GM12878 (cell line): ENCODE measurements at regions of chr4 and their contacts with region 1.

Region 1: DNA sequence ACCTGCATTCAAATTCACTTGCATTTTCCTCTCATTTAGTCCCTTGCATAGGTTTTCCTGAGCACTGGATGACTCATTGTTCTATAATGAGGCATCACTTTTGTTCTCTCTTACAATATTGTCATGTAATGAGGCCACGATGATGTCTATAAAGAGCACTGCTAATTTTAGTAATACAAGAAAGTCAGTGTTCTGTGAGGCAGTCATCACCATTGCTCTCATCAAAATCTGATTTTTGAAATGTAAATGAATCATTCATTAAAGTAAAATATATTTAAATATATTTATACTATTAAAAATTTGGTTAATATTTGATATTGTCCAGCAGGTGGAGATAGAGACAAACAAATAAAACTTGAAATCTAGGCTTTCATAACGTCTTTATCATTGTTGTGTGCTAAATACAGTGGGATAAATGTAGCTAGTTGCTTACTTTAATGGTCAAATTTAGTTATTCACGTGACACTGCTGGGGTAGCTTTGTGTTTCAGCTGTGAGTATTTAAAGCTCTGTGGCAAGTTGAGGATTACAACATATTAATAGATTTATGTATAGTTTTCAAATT is 15.4 kb downstream of the HMGB2 start:
- DNase-seq: no peak
- ATAC-seq: peak; percentile 51; the same call in 2 of the 3 replicates
- H3K4me3 ChIP-seq: no peak overlapping the region
- H3K27ac ChIP-seq: no peak overlapping the region
- H3K4me1 ChIP-seq: no peaks in the 10 kb centered on the region; the same call in 1 of the 2 replicates
- H3K27me3 ChIP-seq: no peaks in the 10 kb centered on the region
- CTCF ChIP-seq: peak in 1 of 3 experiments; percentile 14; a peak in 3 of 6 replicates
- EP300 ChIP-seq: no peak
- POLR2A ChIP-seq: no peak
- RAD21 ChIP-seq: peak; percentile 45

Region 2: GRCh38 chr4:173025131-173025530 is 293.6 kb before region 1 on chr4:
- CTCF ChIA-PET with region 1: interaction called, 10 read pairs
- POLR2A ChIA-PET with region 1: no interaction called
- RAD21 ChIA-PET with region 1: no interaction called
- SMC1A ChIA-PET with region 1: interaction called, 3 read pairs
- in situ Hi-C with region 1: no loop called
- intact Hi-C with region 1: no loop called
- DNase-seq: peak; percentile 16
- ATAC-seq: peak; percentile 95
- H3K4me3 ChIP-seq: no peak overlapping the region
- H3K27ac ChIP-seq: no peak overlapping the region
- H3K4me1 ChIP-seq: no peaks in the 10 kb centered on the region
- H3K27me3 ChIP-seq: no peaks in the 10 kb centered on the region; a peak in 1 of 4 replicates
- CTCF ChIP-seq: peak; percentile 54 to 63 (median 58); a peak in 5 of 6 replicates
- EP300 ChIP-seq: no peak
- POLR2A ChIP-seq: no peak
- RAD21 ChIP-seq: peak; percentile 91

Region 3: DNA sequence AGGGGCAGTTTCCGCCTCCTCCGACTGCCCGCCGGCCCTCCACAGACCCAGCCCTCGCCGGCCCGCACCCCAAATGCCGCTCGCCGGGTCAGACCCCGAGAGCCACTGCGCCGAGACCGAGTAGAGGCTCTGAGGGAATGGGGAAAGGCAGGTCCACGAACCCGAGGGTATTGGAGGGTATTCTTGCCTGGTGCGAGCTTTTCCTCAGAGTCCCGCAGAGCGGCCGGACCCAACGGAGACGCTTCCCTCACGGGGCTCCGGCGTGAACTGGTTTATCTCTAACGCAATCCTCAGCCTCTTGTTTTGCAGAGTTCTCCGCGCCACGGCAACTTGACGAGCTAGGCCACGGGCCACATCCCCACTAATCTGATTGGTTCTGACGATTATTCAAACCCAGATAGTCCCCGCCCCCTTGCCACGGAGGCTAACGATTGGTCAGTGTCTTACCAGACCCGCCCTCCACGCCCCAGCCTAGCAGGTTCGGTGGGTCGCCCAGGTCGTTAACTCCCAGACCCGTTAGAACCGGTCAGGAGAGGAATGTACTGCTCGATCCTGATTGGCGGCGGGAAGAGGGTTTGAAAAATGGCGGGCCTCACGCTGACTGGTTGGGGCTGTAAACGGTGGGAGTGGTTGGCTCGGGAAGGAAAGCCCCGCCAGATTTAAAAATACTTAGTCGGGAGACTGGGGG is 15.5 kb after region 1 on chr4 and contains the start of gene HMGB2:
- CTCF ChIA-PET with region 1: interaction called, 24 read pairs
- POLR2A ChIA-PET with region 1: interaction called, 9 read pairs
- RAD21 ChIA-PET with region 1: interaction called, 11 read pairs
- SMC1A ChIA-PET with region 1: interaction called, 28 read pairs
- in situ Hi-C with region 1: no loop called
- intact Hi-C with region 1: no loop called
- DNase-seq: peak; percentile 99
- ATAC-seq: peak; percentile 92
- H3K4me3 ChIP-seq: peak within 1 kb of the TSS; percentile 94
- H3K27ac ChIP-seq: peak within 1 kb of the TSS; percentile 100
- H3K4me1 ChIP-seq: peaks cover 6% of the 10 kb centered on the region
- H3K27me3 ChIP-seq: no peaks in the 10 kb centered on the region
- CTCF ChIP-seq: no peak
- EP300 ChIP-seq: no peak; a peak in 1 of 4 replicates
- POLR2A ChIP-seq: peak; percentile 98
- RAD21 ChIP-seq: no peak
- polyA plus RNA-seq, gene HMGB2: 858 to 954 TPM

Region 4: GRCh38 chr4:173360587-173361221 is 42.0 kb after region 1 on chr4:
- CTCF ChIA-PET with region 1: interaction called, 6 read pairs
- POLR2A ChIA-PET with region 1: no interaction called
- RAD21 ChIA-PET with region 1: interaction called, 6 read pairs
- SMC1A ChIA-PET with region 1: interaction called, 5 read pairs
- in situ Hi-C with region 1: no loop called
- intact Hi-C with region 1: loop called (anchors 2 kb)
- DNase-seq: no peak
- ATAC-seq: peak; percentile 63
- H3K4me3 ChIP-seq: no peak overlapping the region
- H3K27ac ChIP-seq: no peak overlapping the region
- H3K4me1 ChIP-seq: no peaks in the 10 kb centered on the region
- H3K27me3 ChIP-seq: no peaks in the 10 kb centered on the region
- CTCF ChIP-seq: peak in 2 of 3 experiments; percentile 15 to 24; a peak in 1 of 6 replicates
- EP300 ChIP-seq: no peak
- POLR2A ChIP-seq: no peak
- RAD21 ChIP-seq: 0 out of 2 replicates have a peak, but pooled peaks have one; percentile 8

Region 5: GRCh38 chr4:173370477-173371291 is 52.0 kb after region 1 on chr4 and contains the start of gene SAP30:
- CTCF ChIA-PET with region 1: interaction called, 19 read pairs
- POLR2A ChIA-PET with region 1: interaction called, 9 read pairs
- RAD21 ChIA-PET with region 1: interaction called, 8 read pairs
- SMC1A ChIA-PET with region 1: interaction called, 9 read pairs
- in situ Hi-C with region 1: no loop called
- intact Hi-C with region 1: no loop called
- DNase-seq: peak; percentile 89
- ATAC-seq: peak; percentile 86
- H3K4me3 ChIP-seq: peak within 1 kb of the TSS; percentile 99
- H3K27ac ChIP-seq: peak within 1 kb of the TSS; percentile 84
- H3K4me1 ChIP-seq: peaks cover 8% of the 10 kb centered on the region
- H3K27me3 ChIP-seq: no peaks in the 10 kb centered on the region
- CTCF ChIP-seq: no peak
- EP300 ChIP-seq: no peak
- POLR2A ChIP-seq: peak; percentile 97
- RAD21 ChIP-seq: no peak
- polyA plus RNA-seq, gene SAP30: 5.4 to 24.0 TPM

Region 6: GRCh38 chr4:173380987-173381386 is 62.3 kb after region 1 on chr4:
- CTCF ChIA-PET with region 1: interaction called, 7 read pairs
- POLR2A ChIA-PET with region 1: no interaction called
- RAD21 ChIA-PET with region 1: interaction called, 4 read pairs
- SMC1A ChIA-PET with region 1: interaction called, 10 read pairs
- in situ Hi-C with region 1: no loop called
- intact Hi-C with region 1: no loop called
- DNase-seq: no peak
- ATAC-seq: peak; percentile 57
- H3K4me3 ChIP-seq: no peak overlapping the region
- H3K27ac ChIP-seq: no peak overlapping the region
- H3K4me1 ChIP-seq: no peaks in the 10 kb centered on the region
- H3K27me3 ChIP-seq: no peaks in the 10 kb centered on the region
- CTCF ChIP-seq: no peak
- EP300 ChIP-seq: no peak
- POLR2A ChIP-seq: no peak
- RAD21 ChIP-seq: no peak

Region 7: DNA sequence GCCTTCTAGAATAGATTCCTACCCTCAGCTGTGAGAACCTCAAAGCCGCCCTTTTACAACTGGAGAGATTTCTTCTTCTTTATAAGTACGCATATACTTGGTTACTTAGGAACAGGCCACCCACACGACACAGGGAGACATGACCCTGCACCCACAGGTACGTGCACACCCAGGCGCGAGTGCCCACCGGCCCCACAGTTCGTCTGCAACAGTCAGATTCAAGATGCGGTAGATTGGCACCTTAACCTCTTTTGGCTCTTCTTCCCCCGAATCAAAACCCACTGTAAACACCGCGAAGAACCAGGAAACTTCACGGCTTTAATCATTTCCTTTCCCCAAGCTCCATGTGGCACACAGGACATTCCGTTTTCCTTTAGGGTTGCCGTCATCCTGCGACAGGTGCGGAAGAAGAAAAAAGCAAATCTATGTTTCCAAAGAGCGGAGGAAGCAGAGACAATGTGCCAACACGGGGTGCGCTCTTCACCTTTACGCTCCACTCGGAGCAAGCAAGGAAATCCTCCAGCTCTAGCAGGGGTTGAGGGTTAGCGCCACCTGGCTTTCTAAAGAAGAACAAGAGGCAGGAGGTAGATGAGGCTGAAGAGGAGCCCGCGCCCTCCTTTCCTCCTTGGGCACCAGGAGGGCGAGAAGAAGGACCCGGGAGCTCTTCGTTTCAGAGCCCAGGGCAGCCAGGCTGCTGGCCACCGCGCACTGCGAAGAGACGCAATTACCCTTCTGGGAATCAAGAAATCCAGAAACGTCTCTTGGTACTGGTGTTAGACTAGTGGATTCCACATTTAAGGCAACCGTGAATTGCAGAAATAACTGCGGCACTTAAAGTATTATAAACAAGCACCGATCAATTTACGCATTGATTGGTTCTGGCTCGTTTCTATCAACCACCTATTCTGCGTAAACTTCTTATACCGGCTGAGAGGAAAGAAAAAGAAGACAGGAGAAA is 175.6 kb after region 1 on chr4:
- CTCF ChIA-PET with region 1: interaction called, 6 read pairs
- POLR2A ChIA-PET with region 1: no interaction called
- RAD21 ChIA-PET with region 1: interaction called, 8 read pairs
- SMC1A ChIA-PET with region 1: no interaction called
- in situ Hi-C with region 1: no loop called
- intact Hi-C with region 1: loop called (anchors 5 kb)
- DNase-seq: peak; percentile 27
- ATAC-seq: peak; percentile 99
- H3K4me3 ChIP-seq: peak overlapping the region; percentile 70; the same call in 1 of the 2 replicates
- H3K27ac ChIP-seq: no peak overlapping the region
- H3K4me1 ChIP-seq: peaks cover 4% of the 10 kb centered on the region
- H3K27me3 ChIP-seq: no peaks in the 10 kb centered on the region
- CTCF ChIP-seq: peak; percentile 78 to 91 (median 82)
- EP300 ChIP-seq: no peak
- POLR2A ChIP-seq: no peak
- RAD21 ChIP-seq: peak; percentile 83